Activated CD4-positive, alpha-beta T cell treated with anti-CD3 and anti-CD28 coated beads, Interleukin-2, amount 10 ng/mL, durations not matched to agents 24 days and 14 days (primary cell): ENCODE measurements at regions of chr9 and their contacts with region 1.

Region 1: GRCh38 chr9:120842690-120843499 is at the start of gene PSMD5:
- DNase-seq: peak; percentile 99
- H3K4me3 Mint-ChIP-seq: peak within 1 kb of the TSS; percentile 97
- H3K27ac Mint-ChIP-seq: peak within 1 kb of the TSS; percentile 96
- H3K4me1 Mint-ChIP-seq: peaks cover 67% of the 10 kb centered on the region
- H3K27me3 Mint-ChIP-seq: no peaks in the 10 kb centered on the region
- total RNA-seq, gene PSMD5: 58.1 and 63.7 TPM in 2 replicates

Region 2: DNA sequence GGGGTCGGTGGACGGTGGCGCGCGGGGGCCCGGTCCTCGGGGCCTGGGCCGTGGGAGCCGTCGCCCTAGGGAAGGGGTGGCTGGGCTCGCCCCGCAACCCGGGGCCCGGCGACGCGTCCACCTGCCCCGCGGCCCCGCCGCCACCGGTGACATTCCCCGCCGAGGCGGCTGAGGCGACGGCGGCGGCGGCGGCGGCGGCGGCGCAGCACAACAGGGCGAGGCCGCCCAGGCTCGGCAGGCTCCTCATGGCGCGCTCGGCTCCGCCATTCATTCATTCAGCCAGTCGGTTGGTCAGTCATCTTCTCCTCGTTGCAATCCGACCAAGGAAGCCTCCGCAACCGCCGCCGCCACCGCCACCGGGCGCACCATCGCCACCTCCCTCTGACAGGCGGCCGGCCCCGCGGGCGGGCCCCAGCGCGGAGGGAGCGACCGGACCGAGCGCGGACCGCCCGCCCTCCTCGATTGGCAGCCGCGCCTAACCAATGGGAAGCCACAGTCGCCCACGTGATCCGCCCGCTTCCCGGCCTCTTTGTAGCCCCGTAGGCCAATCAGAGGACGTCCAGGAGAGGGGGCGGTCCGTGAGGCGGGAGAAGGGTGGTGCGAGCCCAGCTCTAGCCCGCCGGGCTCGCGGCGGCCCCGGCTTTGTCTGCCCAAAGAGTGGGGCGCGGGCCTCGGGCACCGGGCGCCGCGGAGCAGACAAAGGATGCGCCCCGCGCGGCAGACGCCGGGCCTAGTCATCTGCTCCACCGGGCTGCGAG is 128.6 kb before region 1 on chr9 and contains the start of gene MEGF9:
- intact Hi-C with region 1: loop called (anchors 2 kb)
- DNase-seq: peak; percentile 99
- H3K4me3 Mint-ChIP-seq: peak within 1 kb of the TSS; percentile 94
- H3K27ac Mint-ChIP-seq: peak within 1 kb of the TSS; percentile 88
- H3K4me1 Mint-ChIP-seq: peaks cover 36% of the 10 kb centered on the region
- H3K27me3 Mint-ChIP-seq: no peaks in the 10 kb centered on the region
- total RNA-seq, gene MEGF9: 4.5 and 4.9 TPM in 2 replicates

Region 3: DNA sequence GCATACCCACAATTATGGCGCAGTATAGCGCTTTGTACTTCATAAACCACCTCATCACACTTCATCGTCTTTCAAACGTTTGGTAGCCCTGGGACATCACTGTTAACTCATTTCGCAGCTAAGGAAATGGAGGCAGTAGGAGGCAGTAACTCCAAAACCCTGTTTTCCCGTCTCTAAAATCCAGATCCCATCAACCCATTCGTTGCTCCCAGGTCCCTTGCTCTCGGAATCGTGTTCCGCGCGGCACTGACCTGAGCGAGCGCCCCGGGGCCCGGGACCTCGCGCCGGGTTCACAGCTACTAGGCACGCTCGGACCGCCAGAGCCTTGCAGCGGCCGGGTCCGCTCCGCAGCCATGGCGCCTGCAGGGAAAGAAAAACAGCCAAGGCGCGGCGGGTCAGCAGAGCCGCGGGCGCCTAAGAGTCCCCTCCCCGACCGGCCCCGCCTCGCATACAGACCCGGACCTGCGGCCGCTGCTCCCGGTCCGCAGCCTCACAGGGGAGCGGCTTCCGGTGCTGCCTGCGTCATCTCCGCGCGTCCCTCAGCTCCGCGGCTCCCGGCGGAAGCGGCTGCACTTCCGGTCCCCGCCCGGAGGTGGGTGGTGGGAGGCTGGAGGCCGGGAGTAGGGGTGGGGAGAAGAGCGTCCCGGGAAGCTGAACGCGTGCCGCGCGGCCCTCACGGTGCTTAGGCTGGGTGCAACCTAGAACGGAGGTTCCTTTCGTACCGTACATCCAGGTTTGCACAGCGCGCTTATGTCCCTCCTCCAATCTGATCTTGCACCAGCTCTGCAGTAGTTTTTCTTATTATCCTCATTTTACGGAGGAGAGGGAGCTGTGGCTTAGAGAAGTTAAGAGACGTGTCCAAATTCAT is 49.8 kb before region 1 on chr9 and contains the start of gene FBXW2:
- intact Hi-C with region 1: loop called (anchors 1 kb)
- DNase-seq: peak; percentile 98
- H3K4me3 Mint-ChIP-seq: peak within 1 kb of the TSS; percentile 86
- H3K27ac Mint-ChIP-seq: peak within 1 kb of the TSS; percentile 82
- H3K4me1 Mint-ChIP-seq: peaks cover 43% of the 10 kb centered on the region
- H3K27me3 Mint-ChIP-seq: no peaks in the 10 kb centered on the region
- total RNA-seq, gene FBXW2: 84.9 and 87.9 TPM in 2 replicates

Region 4: DNA sequence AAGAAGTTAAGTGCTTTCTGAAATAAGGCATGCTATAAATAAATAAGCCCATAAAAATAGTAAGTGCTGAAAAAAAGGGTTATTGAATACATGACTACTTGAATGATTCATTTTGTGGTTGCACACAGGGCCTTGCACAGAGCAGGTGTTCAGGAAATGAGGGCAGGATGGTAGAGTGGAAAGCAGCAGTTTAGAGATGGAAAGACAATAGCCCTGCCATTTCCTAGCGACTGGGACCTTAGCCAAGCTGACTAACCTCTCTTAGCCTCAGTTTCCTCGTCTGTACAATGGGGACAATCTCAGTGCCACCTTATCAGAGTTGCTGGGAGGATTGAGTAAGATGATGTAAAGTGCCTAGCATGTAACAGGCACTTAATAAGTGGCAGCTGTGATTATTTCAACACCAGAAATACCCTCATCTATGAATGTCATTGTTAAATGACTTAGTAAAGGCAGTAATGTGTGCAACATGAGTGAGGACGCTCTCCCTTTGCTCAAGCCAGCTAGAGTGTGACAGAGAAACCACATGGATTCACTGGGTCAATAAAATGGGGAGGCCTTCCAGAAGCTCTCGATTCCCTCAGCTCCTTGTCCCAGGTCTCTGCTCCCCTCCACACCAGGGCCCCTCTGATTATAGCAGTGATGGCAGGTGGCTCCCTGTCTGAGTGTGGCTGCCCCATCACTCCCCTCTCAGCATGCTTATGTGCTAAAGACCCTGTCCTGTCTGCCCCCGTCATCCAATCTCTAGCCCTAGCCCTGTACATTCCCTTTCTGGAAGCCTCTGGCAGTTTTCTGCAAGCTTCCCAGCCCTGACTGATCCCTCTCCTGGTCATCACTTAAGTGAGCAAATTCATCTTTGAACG is 50.1 kb after region 1 on chr9:
- intact Hi-C with region 1: loop called (anchors 1 kb)
- DNase-seq: peak; percentile 90
- H3K4me3 Mint-ChIP-seq: peak overlapping the region; percentile 85
- H3K27ac Mint-ChIP-seq: peak overlapping the region; percentile 99
- H3K4me1 Mint-ChIP-seq: peaks cover 79% of the 10 kb centered on the region
- H3K27me3 Mint-ChIP-seq: no peaks in the 10 kb centered on the region

Region 5: DNA sequence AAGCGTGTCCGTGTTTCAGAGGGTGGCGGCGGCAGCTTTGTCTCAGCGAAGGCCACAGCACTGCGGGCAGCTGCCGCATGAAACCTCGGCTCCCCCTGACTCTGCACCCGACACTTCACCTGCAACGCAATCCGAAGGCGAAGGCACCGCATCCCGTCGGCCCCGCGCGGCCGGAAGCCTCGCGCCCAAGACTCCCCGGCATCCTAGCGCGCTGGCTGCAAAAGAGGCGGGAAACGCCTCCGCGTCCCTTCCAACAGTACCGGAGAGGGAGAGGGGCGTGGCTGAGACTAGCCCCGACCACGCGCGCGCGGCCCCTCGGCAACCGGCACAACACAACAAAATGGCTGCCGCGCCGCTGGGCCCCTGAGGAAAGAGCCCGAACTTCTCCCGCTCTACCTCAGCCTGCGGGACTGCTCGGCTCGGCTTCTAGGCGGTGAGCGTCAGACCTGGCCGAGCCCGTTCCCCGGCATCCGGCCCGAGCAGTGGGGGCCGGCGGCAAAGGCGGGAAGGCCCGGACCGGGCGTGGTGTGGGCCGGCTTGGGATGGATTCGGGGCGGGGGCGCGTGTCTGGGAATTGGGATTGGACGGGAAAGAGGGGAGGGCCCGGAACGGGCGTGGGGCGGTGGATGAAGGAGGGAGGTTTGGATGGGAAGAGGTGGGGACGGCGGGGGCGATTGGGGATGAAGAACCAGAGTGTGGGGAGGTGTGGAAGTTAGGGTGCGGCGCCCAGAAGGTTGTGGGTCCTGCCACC is 231.9 kb after region 1 on chr9 and contains the start of gene CNTRL:
- intact Hi-C with region 1: loop called (anchors 2 kb)
- DNase-seq: peak; percentile 97
- H3K4me3 Mint-ChIP-seq: peak within 1 kb of the TSS; percentile 100
- H3K27ac Mint-ChIP-seq: peak within 1 kb of the TSS; percentile 98
- H3K4me1 Mint-ChIP-seq: peaks cover 52% of the 10 kb centered on the region
- H3K27me3 Mint-ChIP-seq: no peaks in the 10 kb centered on the region
- total RNA-seq, gene CNTRL: 68.3 and 69.4 TPM in 2 replicates